ENCODE measurements at regions of chr16 and their contacts with region 1.

Region 1: DNA sequence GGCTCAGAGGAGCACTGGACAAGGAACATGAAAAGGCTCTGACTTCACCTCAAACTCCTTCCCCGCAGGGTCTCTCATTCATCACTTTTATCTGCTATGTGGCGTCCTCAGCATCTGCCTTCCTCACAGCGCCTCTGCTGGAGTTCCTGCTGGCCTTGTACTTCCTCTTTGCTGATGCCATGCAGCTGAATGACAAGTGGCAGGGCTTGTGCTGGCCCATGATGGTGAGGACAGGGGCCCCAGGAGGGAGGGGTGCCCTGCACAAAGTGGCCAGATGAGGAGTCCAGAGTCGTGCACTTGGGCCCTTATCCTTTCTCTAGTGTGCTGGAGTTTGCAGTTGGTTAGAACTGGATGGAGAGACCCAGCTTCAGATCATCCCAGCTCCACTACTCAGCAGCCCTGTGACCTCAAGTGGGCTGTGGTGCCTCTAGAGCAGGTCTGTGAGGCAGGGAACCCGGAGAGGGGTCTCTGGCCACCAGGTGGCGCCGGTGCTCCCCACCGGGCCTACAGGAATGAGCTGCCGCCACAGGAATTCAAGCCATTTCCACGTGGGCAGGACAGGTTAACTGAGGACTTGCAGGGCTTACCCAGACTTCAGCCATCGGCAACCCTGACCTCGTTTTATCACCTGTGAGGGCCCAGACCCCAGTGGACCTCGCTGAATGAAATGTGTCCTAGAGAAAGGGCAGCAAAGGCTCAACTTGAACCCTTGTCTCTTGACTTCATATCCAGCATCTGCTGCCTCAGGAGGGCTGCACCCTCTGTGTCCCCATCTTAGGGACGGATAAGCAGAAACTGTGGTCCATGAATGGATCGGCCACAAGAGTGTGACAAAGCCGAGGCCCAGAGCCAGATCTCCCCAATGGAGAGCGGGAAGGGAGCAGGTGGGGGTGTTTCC is 4.0 kb downstream of the CMTM3 start:
- DNase-seq: peak; percentile 86
- ATAC-seq: peak; percentile 49
- H3K4me3 ChIP-seq: no peak overlapping the region
- H3K27ac ChIP-seq: peak overlapping the region; percentile 19
- H3K4me1 ChIP-seq: peaks cover 21% of the 10 kb centered on the region
- H3K27me3 ChIP-seq: no peaks in the 10 kb centered on the region
- CTCF ChIP-seq: peak; percentile 93
- POLR2A ChIP-seq: no peak
- RAD21 ChIP-seq: peak; percentile 80

Region 2: DNA sequence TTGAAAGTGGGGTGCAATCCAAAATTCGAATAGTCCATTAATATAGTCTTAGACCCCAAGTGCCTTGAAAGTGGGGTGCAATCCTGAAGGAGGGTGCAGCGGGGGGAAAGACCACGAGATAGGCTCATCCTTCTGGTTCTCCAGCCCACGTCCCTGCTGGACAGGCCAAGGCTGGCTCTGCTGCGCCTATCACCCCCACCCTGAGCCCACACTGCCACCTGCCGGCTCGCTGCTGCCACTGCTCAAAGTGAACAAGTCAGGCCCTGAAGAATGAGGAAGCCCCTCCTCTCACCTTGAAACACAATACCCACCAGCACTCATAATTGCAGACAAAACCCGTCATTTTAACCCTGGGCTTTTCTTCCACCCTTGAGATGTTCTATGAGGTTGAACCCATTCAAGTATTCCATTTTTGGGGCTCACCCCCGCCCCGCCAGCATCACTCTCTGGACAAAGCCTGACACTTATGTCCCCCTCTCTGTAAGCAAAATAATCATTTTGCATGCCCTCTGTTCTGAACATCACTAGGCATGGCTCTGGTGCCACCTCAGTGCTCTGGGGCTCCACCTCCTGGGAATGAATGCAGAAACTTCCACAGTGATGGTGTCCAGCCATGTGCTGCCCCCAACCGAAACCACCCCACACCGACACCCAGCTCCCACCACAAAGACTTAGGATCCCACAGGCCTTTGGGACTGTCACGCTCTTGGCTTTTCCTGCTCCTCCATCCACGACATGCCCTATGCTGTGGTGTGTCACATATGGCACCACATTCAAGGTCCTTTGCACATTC is 124.6 kb before region 1 on chr16:
- CTCF ChIA-PET with region 1: no interaction called
- POLR2A ChIA-PET with region 1: no interaction called
- dilution Hi-C with region 1: no loop called
- in situ Hi-C with region 1: no loop called
- intact Hi-C with region 1: loop called (anchors 2 kb)
- DNase-seq: peak; percentile 63
- ATAC-seq: peak; percentile 89
- H3K4me3 ChIP-seq: no peak overlapping the region
- H3K27ac ChIP-seq: no peak overlapping the region
- H3K4me1 ChIP-seq: peaks cover 11% of the 10 kb centered on the region; the same call in 1 of the 2 replicates
- H3K27me3 ChIP-seq: no peaks in the 10 kb centered on the region
- CTCF ChIP-seq: peak; percentile 97
- POLR2A ChIP-seq: 0 out of 2 replicates have a peak, but pooled peaks have one; percentile 30
- RAD21 ChIP-seq: peak; percentile 95

Region 3: GRCh38 chr16:66552286-66553177 is 56.0 kb before region 1 on chr16 and contains the start of gene CKLF:
- CTCF ChIA-PET with region 1: no interaction called
- POLR2A ChIA-PET with region 1: no interaction called
- dilution Hi-C with region 1: no loop called
- in situ Hi-C with region 1: loop called (anchors 5 kb)
- intact Hi-C with region 1: loop called (anchors 2 kb)
- DNase-seq: peak; percentile 83
- ATAC-seq: peak; percentile 79
- H3K4me3 ChIP-seq: peak within 1 kb of the TSS; percentile 60
- H3K27ac ChIP-seq: peak within 1 kb of the TSS; percentile 96
- H3K4me1 ChIP-seq: peaks cover 7% of the 10 kb centered on the region
- H3K27me3 ChIP-seq: no peaks in the 10 kb centered on the region
- CTCF ChIP-seq: no peak
- POLR2A ChIP-seq: no peak
- RAD21 ChIP-seq: no peak
- total RNA-seq, gene CKLF: 60.8 and 66.7 TPM in 2 replicates

Region 4: GRCh38 chr16:66660422-66661209 is 52.1 kb after region 1 on chr16:
- CTCF ChIA-PET with region 1: interaction called, 4 read pairs
- POLR2A ChIA-PET with region 1: no interaction called
- dilution Hi-C with region 1: no loop called
- in situ Hi-C with region 1: no loop called
- intact Hi-C with region 1: loop called (anchors 1 kb)
- DNase-seq: peak; percentile 84
- ATAC-seq: peak; percentile 96
- H3K4me3 ChIP-seq: no peak overlapping the region
- H3K27ac ChIP-seq: peak overlapping the region; percentile 41; the same call in 1 of the 2 replicates
- H3K4me1 ChIP-seq: peaks cover 8% of the 10 kb centered on the region
- H3K27me3 ChIP-seq: no peaks in the 10 kb centered on the region
- CTCF ChIP-seq: peak; percentile 38
- POLR2A ChIP-seq: no peak
- RAD21 ChIP-seq: peak; percentile 41

Region 5: GRCh38 chr16:66717112-66717675 is 108.7 kb after region 1 on chr16:
- CTCF ChIA-PET with region 1: no interaction called
- POLR2A ChIA-PET with region 1: no interaction called
- dilution Hi-C with region 1: no loop called
- in situ Hi-C with region 1: no loop called
- intact Hi-C with region 1: loop called (anchors 1 kb)
- DNase-seq: peak; percentile 88
- ATAC-seq: peak; percentile 67
- H3K4me3 ChIP-seq: no peak overlapping the region
- H3K27ac ChIP-seq: no peak overlapping the region
- H3K4me1 ChIP-seq: peaks cover 7% of the 10 kb centered on the region
- H3K27me3 ChIP-seq: no peaks in the 10 kb centered on the region
- CTCF ChIP-seq: peak; percentile 52
- POLR2A ChIP-seq: no peak
- RAD21 ChIP-seq: peak; percentile 36

Region 6: GRCh38 chr16:66740010-66740409 is 131.5 kb after region 1 on chr16:
- CTCF ChIA-PET with region 1: no interaction called
- POLR2A ChIA-PET with region 1: no interaction called
- dilution Hi-C with region 1: no loop called
- in situ Hi-C with region 1: no loop called
- intact Hi-C with region 1: loop called (anchors 5 kb)
- DNase-seq: peak; percentile 32
- ATAC-seq: peak; percentile 45
- H3K4me3 ChIP-seq: no peak overlapping the region
- H3K27ac ChIP-seq: no peak overlapping the region
- H3K4me1 ChIP-seq: peaks cover 14% of the 10 kb centered on the region
- H3K27me3 ChIP-seq: no peaks in the 10 kb centered on the region
- CTCF ChIP-seq: peak; percentile 58
- POLR2A ChIP-seq: no peak
- RAD21 ChIP-seq: no peak; the same call in 1 of the 2 replicates

Region 7: DNA sequence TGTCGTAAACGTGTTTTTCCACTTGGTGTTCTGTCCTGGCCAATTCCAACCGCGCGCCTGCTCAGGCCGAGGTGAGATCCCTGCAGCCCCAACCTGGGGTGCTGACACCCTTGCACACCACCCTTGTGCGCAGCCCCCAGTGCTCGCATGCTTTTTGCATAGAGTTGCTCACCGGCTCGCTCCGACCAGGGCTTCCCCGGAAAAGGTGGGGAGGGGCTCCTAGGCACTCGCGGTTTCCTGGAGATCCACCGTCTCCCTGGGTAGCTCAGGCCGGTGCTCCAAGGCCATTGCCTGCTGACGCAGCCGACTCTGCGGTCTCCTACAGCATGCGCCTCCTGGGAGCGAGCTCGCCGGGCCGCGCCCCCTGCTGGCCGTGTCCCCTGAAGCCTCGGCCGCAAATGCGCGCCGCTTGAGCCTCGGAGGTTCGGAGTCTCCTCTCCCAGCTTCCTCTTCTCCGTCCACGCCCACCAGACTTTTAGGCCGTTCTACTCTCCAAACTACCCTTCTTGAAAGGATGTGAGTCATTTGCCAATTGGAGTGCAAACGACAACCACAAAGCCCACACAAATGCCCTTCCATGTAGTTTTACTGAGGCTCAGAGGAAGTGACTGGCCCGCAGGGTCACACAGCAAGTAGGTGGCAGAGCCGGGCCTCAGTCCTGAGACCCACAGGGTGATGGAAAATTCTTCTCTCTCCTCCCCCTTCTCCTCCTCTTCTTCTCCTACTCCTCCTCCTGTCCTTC is 264.6 kb after region 1 on chr16:
- CTCF ChIA-PET with region 1: interaction called, 10 read pairs
- POLR2A ChIA-PET with region 1: interaction called, 3 read pairs
- dilution Hi-C with region 1: no loop called
- in situ Hi-C with region 1: no loop called
- intact Hi-C with region 1: loop called (anchors 2 kb)
- DNase-seq: peak; percentile 100
- ATAC-seq: peak; percentile 91
- H3K4me3 ChIP-seq: peak overlapping the region; percentile 18
- H3K27ac ChIP-seq: peak overlapping the region; percentile 52
- H3K4me1 ChIP-seq: peaks cover 12% of the 10 kb centered on the region
- H3K27me3 ChIP-seq: no peaks in the 10 kb centered on the region
- CTCF ChIP-seq: peak; percentile 98
- POLR2A ChIP-seq: no peak
- RAD21 ChIP-seq: peak; percentile 69

Region 8: DNA sequence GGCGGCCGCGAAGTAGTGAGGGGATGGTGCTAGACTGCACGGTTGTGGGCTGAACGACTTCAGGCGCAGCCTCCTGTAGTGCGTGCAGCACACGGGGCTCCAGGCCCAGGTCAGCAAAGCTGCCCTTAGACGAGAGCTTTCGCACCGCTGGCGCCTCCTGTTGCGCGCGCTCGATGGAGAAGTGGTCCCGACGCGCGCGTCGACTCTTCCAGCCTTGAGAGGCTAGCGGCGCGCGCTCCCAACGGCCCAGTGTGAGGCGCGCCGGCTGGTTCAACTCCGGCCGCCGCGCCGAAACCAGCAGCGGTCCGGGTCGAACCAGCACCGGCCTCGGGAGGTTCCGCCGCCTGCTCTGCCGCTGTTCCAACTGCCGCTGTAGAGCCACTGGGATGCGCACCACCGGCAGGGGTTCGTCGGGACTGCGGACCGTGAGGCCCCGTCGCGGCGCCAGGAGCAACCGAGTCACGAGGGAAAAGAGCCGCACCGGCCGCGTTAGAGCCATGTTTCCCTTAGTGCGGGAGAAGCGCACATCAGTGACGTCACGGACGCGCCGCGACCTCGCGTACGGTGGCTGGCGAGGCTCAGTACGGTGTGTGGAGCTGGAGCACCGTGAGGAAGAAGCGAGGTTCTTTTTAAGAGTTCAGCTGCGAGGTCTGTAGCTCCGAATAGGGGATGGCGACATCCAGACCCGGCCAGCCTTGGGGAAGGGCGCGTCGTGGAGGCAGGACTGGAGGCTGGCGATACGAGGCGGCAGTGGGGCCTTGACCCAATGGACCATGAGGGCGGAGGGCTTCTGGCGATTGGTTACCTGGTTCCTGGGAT is 1414.4 kb after region 1 on chr16 and contains the starts of genes DDX28 and DUS2:
- CTCF ChIA-PET with region 1: no interaction called
- POLR2A ChIA-PET with region 1: no interaction called
- dilution Hi-C with region 1: no loop called
- in situ Hi-C with region 1: no loop called
- intact Hi-C with region 1: no loop called
- DNase-seq: peak; percentile 91
- ATAC-seq: peak; percentile 97
- H3K4me3 ChIP-seq: peak within 1 kb of the TSS; percentile 82
- H3K27ac ChIP-seq: peak within 1 kb of the TSS; percentile 83
- H3K4me1 ChIP-seq: peaks cover 7% of the 10 kb centered on the region
- H3K27me3 ChIP-seq: no peaks in the 10 kb centered on the region
- CTCF ChIP-seq: no peak
- POLR2A ChIP-seq: peak; percentile 77; the same call in 1 of the 2 replicates
- RAD21 ChIP-seq: no peak
- total RNA-seq, gene DDX28: 8.9 and 10.0 TPM in 2 replicates
- total RNA-seq, gene DUS2: 28.1 and 30.5 TPM in 2 replicates